PC-3 (cell line): ENCODE measurements at regions of chr19 and their contacts with region 1.

Region 1: GRCh38 chr19:45245334-45245787 is at the start of gene EXOC3L2:
- DNase-seq: no peak
- ATAC-seq: no peak
- H3K4me3 ChIP-seq: no peak within 1 kb of the TSS
- H3K27ac ChIP-seq: no peak within 1 kb of the TSS
- H3K4me1 ChIP-seq: peaks cover 3% of the 10 kb centered on the region; the same call in 1 of the 2 replicates
- H3K27me3 ChIP-seq: no peaks in the 10 kb centered on the region
- CTCF ChIP-seq: no peak
- total RNA-seq, gene EXOC3L2: not detected in 2 replicates

Region 2: GRCh38 chr19:45164577-45165335 is 80.6 kb before region 1 on chr19:
- CTCF ChIA-PET with region 1: no interaction called
- POLR2A ChIA-PET with region 1: no interaction called
- intact Hi-C with region 1: loop called (anchors 5 kb)
- DNase-seq: no peak
- ATAC-seq: no peak
- H3K4me3 ChIP-seq: no peak overlapping the region
- H3K27ac ChIP-seq: no peak overlapping the region
- H3K4me1 ChIP-seq: peaks cover 11% of the 10 kb centered on the region
- H3K27me3 ChIP-seq: no peaks in the 10 kb centered on the region
- CTCF ChIP-seq: no peak

Region 3: GRCh38 chr19:45195764-45196163 is 49.6 kb before region 1 on chr19:
- CTCF ChIA-PET with region 1: no interaction called
- POLR2A ChIA-PET with region 1: no interaction called
- intact Hi-C with region 1: loop called (anchors 5 kb)
- DNase-seq: peak; percentile 76
- ATAC-seq: peak; percentile 93
- H3K4me3 ChIP-seq: no peak overlapping the region
- H3K27ac ChIP-seq: no peak overlapping the region
- H3K4me1 ChIP-seq: peaks cover 5% of the 10 kb centered on the region; the same call in 1 of the 2 replicates
- H3K27me3 ChIP-seq: no peaks in the 10 kb centered on the region
- CTCF ChIP-seq: no peak

Region 4: GRCh38 chr19:45215383-45216191 is 29.8 kb before region 1 on chr19:
- CTCF ChIA-PET with region 1: no interaction called
- POLR2A ChIA-PET with region 1: no interaction called
- intact Hi-C with region 1: no loop called
- DNase-seq: peak; percentile 47
- ATAC-seq: peak; percentile 65
- H3K4me3 ChIP-seq: peak overlapping the region; percentile 65
- H3K27ac ChIP-seq: no peak overlapping the region
- H3K4me1 ChIP-seq: no peaks in the 10 kb centered on the region
- H3K27me3 ChIP-seq: 0 out of 2 replicates have a peak, but pooled peaks cover 12% of the 10 kb centered on the region
- CTCF ChIP-seq: no peak